GM10248 (cell line): ENCODE measurements at regions of chr15 and their contacts with region 1.

Region 1: GRCh38 chr15:23035964-23036566 is 3.3 kb downstream of the TUBGCP5 start:
- DNase-seq: peak; percentile 56
- CTCF ChIP-seq: peak; percentile 71

Region 2: GRCh38 chr15:23014394-23015000 is 21.6 kb before region 1 on chr15:
- CTCF ChIA-PET with region 1: interaction called, 14 read pairs
- POLR2A ChIA-PET with region 1: no interaction called
- DNase-seq: no peak
- CTCF ChIP-seq: no peak